H1 (cell line): ENCODE measurements at regions of chr1 and their contacts with region 1.

Region 1: GRCh38 chr1:43073490-43074230 is 98.4 kb downstream of the EBNA1BP2 start:
- DNase-seq: peak; percentile 59 to 84
- H3K4me3 ChIP-seq: no peak overlapping the region
- H3K27ac ChIP-seq: no peak overlapping the region
- H3K4me1 ChIP-seq: peaks cover 0 to 18% (median 13%) of the 10 kb centered on the region in 4 experiments; a peak in 6 of 7 replicates
- H3K27me3 ChIP-seq: no peaks in the 10 kb centered on the region
- CTCF ChIP-seq: peak; percentile 71 to 92 (median 86)
- EP300 ChIP-seq: no peak
- POLR2A ChIP-seq: no peak
- RAD21 ChIP-seq: peak; percentile 100

Region 2: GRCh38 chr1:42784946-42785693 is 288.5 kb before region 1 on chr1 and contains the start of gene TMEM269:
- CTCF ChIA-PET with region 1: interaction called, 83 read pairs
- POLR2A ChIA-PET with region 1: no interaction called
- DNase-seq: no peak
- H3K4me3 ChIP-seq: no peak within 1 kb of the TSS
- H3K27ac ChIP-seq: no peak within 1 kb of the TSS
- H3K4me1 ChIP-seq: peaks cover 0 to 8% (median under 1%) of the 10 kb centered on the region in 4 experiments; a peak in 2 of 7 replicates
- H3K27me3 ChIP-seq: no peaks in the 10 kb centered on the region
- CTCF ChIP-seq: no peak
- EP300 ChIP-seq: no peak
- POLR2A ChIP-seq: no peak
- RAD21 ChIP-seq: no peak
- total RNA-seq, gene TMEM269: 0.35 and 0.61 TPM in 2 replicates

Region 3: DNA sequence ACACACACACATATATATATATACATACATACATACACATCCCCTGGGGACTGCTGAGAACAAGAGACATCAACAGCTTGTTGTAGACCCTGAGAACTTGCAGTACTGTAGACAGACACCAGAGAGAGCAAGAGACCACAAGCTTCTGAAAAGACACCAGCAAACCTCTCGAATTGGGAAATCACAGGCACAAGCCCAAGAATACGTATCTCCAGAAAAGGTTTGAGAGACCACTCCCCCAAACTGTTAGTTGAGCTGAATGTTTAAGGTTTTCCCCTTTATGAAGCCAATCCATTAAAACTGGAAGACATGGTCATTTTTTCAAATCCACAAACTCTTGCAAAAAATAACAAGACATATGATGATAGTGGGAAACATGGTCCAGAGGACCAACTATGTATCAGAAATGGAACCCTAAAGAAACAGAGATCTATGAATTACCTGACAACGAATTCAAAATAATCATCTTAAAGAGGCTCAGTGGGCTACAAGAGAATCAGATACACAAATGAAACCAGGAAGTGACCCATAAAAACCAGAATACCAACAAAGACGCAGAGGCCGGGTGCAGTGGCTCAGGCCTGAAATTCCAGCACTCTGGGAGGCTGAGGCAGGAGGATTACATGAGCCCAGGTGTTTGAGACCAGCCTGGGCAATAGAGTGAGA is 160.1 kb before region 1 on chr1:
- CTCF ChIA-PET with region 1: interaction called, 353 read pairs
- POLR2A ChIA-PET with region 1: interaction called, 13 read pairs
- DNase-seq: peak; percentile 44 to 62
- H3K4me3 ChIP-seq: no peak overlapping the region
- H3K27ac ChIP-seq: no peak overlapping the region
- H3K4me1 ChIP-seq: no peaks in the 10 kb centered on the region
- H3K27me3 ChIP-seq: peaks cover 0 to 1% (median 0%) of the 10 kb centered on the region in 4 experiments; a peak in 1 of 7 replicates
- CTCF ChIP-seq: peak in 2 of 3 experiments; percentile 80 to 88; a peak in 3 of 4 replicates
- EP300 ChIP-seq: no peak
- POLR2A ChIP-seq: no peak
- RAD21 ChIP-seq: peak; percentile 96

Region 4: GRCh38 chr1:42936309-42937078 is 137.2 kb before region 1 on chr1:
- CTCF ChIA-PET with region 1: interaction called, 48 read pairs
- POLR2A ChIA-PET with region 1: interaction called, 4 read pairs
- DNase-seq: no peak
- H3K4me3 ChIP-seq: no peak overlapping the region
- H3K27ac ChIP-seq: no peak overlapping the region
- H3K4me1 ChIP-seq: peaks cover 3 to 41% (median 21%) of the 10 kb centered on the region in 4 experiments
- H3K27me3 ChIP-seq: no peaks in the 10 kb centered on the region
- CTCF ChIP-seq: no peak
- EP300 ChIP-seq: no peak
- POLR2A ChIP-seq: peak in 1 of 2 experiments; percentile 54; a peak in 1 of 3 replicates
- RAD21 ChIP-seq: no peak

Region 5: DNA sequence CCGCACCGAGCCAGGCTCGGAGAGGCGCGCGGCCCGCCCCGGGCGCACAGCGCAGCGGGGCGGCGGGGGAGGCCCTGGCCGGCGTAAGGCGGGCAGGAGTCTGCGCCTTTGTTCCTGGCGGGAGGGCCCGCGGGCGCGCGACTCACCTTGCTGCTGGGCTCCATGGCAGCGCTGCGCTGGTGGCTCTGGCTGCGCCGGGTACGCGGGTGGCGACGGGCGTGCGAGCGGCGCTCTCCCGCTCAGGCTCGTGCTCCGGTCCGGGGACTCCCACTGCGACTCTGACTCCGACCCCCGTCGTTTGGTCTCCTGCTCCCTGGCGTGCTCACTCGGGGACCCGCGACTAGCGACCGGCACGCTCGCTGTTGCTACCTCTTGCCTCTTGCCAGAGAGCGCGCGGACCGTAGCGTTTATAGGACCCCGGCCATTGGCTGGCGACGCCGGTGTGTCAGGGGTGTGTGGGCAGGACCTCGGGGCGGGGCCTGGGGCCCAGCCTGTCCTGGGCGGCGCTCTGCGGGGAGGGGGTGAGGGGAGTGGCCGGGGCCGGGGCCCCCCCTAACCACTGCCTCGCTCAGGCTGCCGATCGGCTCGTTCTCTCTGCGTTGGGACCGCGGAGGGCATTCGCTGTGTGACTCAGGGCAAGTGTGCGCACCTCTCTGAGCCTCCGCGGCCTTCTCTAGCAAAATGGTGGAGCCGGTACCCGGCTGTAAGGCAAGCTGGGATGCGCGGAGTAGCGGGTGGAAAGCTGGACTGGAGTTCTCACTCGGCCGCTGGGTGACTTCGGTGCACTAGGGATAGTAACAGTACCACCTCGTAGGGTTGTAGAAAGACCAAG is 115.0 kb before region 1 on chr1 and contains the start of gene SLC2A1:
- CTCF ChIA-PET with region 1: interaction called, 29 read pairs
- POLR2A ChIA-PET with region 1: interaction called, 5 read pairs
- DNase-seq: peak; percentile 90 to 95
- H3K4me3 ChIP-seq: peak within 1 kb of the TSS; percentile 69 to 92 (median 91)
- H3K27ac ChIP-seq: peak within 1 kb of the TSS; percentile 87
- H3K4me1 ChIP-seq: peaks cover 17 to 49% (median 36%) of the 10 kb centered on the region in 4 experiments
- H3K27me3 ChIP-seq: no peaks in the 10 kb centered on the region
- CTCF ChIP-seq: peak in 1 of 3 experiments; percentile 2; a peak in 1 of 4 replicates
- EP300 ChIP-seq: no peak; a peak in 1 of 3 replicates
- POLR2A ChIP-seq: peak; percentile 95 to 97
- RAD21 ChIP-seq: no peak
- total RNA-seq, gene SLC2A1: 230 and 239 TPM in 2 replicates

Region 6: GRCh38 chr1:43058545-43059355 is 14.9 kb before region 1 on chr1:
- CTCF ChIA-PET with region 1: interaction called, 13 read pairs
- POLR2A ChIA-PET with region 1: interaction called, 3 read pairs
- DNase-seq: no peak
- H3K4me3 ChIP-seq: no peak overlapping the region
- H3K27ac ChIP-seq: no peak overlapping the region
- H3K4me1 ChIP-seq: peaks cover 0 to 11% (median 7%) of the 10 kb centered on the region in 4 experiments; a peak in 5 of 7 replicates
- H3K27me3 ChIP-seq: no peaks in the 10 kb centered on the region
- CTCF ChIP-seq: no peak
- EP300 ChIP-seq: no peak
- POLR2A ChIP-seq: no peak
- RAD21 ChIP-seq: no peak

Region 7: DNA sequence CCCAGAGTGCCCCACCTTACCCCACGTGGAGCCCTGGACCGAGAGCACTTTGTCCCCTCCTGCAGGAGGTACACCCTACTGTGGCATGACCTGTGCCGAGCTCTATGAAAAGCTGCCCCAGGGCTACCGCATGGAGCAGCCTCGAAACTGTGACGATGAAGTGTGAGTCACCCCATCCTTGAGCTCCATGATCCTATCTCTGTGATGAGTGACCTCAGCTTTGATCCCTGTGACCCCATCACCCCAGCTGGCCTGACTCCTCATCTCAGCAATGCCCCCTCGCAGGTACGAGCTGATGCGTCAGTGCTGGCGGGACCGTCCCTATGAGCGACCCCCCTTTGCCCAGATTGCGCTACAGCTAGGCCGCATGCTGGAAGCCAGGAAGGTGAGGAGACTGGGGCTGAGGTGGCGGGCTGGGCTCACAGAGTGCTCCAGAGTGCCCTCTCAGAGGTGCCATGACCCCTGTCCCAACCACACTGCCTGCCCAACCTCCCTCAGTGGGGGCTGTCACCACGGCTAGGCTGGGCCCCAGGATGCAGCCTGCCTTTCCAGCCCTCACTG is 247.8 kb after region 1 on chr1:
- CTCF ChIA-PET with region 1: no interaction called
- POLR2A ChIA-PET with region 1: no interaction called
- DNase-seq: no peak
- H3K4me3 ChIP-seq: no peak overlapping the region
- H3K27ac ChIP-seq: no peak overlapping the region
- H3K4me1 ChIP-seq: peaks cover 0 to 5% (median 2%) of the 10 kb centered on the region in 4 experiments; a peak in 3 of 7 replicates
- H3K27me3 ChIP-seq: no peaks in the 10 kb centered on the region; a peak in 1 of 7 replicates
- CTCF ChIP-seq: no peak
- EP300 ChIP-seq: no peak
- POLR2A ChIP-seq: no peak
- RAD21 ChIP-seq: no peak